Left colon (tissue), 2 donors: ENCODE measurements at regions of chr2 and their contacts with region 1.

Region 1: DNA sequence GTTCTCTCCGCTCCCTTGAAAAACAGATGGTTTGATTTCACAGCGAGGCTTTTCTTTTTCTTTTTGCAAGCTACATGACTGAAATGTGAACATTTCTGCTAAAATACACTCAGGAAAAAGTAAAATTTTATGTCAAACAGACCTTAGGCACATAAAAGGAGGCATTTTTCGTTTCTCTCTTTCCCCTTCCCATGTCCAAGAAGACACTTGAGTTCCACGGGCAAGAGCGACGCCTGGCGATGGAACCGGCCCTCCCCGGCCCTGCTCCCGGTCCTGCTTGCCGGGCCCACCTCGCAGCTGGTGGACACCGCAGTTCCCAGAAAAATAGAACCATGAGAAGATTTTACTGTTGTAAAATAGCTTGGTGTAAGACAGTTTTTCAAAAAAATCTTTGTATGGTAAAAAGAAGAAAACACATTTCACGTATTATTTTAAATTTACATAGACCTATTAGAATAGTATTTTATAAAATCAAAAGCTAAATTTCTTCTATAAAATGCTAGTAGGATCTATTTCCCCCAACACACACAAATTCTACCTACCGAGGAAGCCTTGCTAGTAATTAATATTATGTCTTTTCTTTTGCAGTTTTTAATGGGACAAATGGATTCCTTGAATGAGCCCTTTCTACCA is 2.3 kb upstream of the ALKAL2 start:
- DNase-seq: peak; percentile 61 to 80
- ATAC-seq: peak; percentile 83

Region 2: GRCh38 chr2:169741-170140 is 120.5 kb before region 1 on chr2:
- intact Hi-C with region 1: loop called in 1 of 2 experiments (anchors 5 kb)
- DNase-seq: no peak
- ATAC-seq: no peak